Caco-2 (cell line): ENCODE measurements at regions of chr5 and their contacts with region 1.

Region 1: GRCh38 chr5:154168395-154168794 is 22.1 kb upstream of the GALNT10 start:
- DNase-seq: no peak
- H3K4me3 ChIP-seq: no peak overlapping the region
- H3K4me3 Mint-ChIP-seq: no peak overlapping the region
- H3K27ac Mint-ChIP-seq: no peak overlapping the region
- H3K4me1 ChIP-seq: no peaks in the 10 kb centered on the region
- H3K4me1 Mint-ChIP-seq: no peaks in the 10 kb centered on the region
- H3K27me3 ChIP-seq: no peaks in the 10 kb centered on the region
- H3K27me3 Mint-ChIP-seq: peaks cover 4% of the 10 kb centered on the region
- CTCF ChIP-seq: no peak

Region 2: DNA sequence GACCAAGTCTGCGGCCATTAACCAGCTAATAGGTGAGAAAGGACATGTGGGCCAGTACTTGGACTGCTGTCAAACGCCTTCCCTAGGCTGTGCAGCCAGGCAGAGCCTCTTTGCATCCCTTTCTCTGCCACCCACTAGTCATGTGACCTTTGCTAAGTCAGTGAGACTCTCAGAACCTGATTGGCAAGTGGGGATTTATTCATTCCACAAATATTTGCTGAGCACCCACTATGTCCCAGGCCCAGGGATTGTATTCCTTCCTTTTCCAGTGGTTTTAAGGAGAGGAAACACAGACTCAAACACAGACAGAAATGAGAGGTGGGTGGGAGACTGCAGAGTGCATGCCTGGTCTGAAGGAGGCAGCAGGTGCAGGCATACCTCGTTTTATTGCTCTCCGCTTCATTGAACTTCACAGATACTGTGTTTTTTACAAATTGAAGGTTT is 49.5 kb before region 1 on chr5:
- CTCF ChIA-PET with region 1: no interaction called
- POLR2A ChIA-PET with region 1: no interaction called
- intact Hi-C with region 1: loop called (anchors 5 kb)
- DNase-seq: peak in 1 of 2 experiments; percentile 18
- H3K4me3 ChIP-seq: no peak overlapping the region
- H3K4me3 Mint-ChIP-seq: no peak overlapping the region
- H3K27ac Mint-ChIP-seq: no peak overlapping the region
- H3K4me1 ChIP-seq: peaks cover 5% of the 10 kb centered on the region; the same call in 1 of the 2 replicates
- H3K4me1 Mint-ChIP-seq: no peaks in the 10 kb centered on the region
- H3K27me3 ChIP-seq: no peaks in the 10 kb centered on the region
- H3K27me3 Mint-ChIP-seq: peaks cover 16% of the 10 kb centered on the region
- CTCF ChIP-seq: peak in 1 of 2 experiments; percentile 19